ENCODE measurements at regions of chr5 and their contacts with region 1.

Region 1: GRCh38 chr5:177425801-177426565 is 493 bp upstream of the GRK6 start:
- DNase-seq: peak; percentile 99 to 100
- H3K4me3 ChIP-seq: peak overlapping the region; percentile 64
- H3K27ac ChIP-seq: peak overlapping the region; percentile 81
- H3K4me1 ChIP-seq: peaks cover 23% of the 10 kb centered on the region
- H3K27me3 ChIP-seq: no peaks in the 10 kb centered on the region
- CTCF ChIP-seq: no peak

Region 2: GRCh38 chr5:177154003-177154643 is 271.9 kb before region 1 on chr5:
- CTCF ChIA-PET with region 1: no interaction called
- POLR2A ChIA-PET with region 1: no interaction called
- intact Hi-C with region 1: no loop called
- DNase-seq: no peak
- H3K4me3 ChIP-seq: no peak overlapping the region
- H3K27ac ChIP-seq: no peak overlapping the region
- H3K4me1 ChIP-seq: no peaks in the 10 kb centered on the region
- H3K27me3 ChIP-seq: no peaks in the 10 kb centered on the region
- CTCF ChIP-seq: no peak

Region 3: GRCh38 chr5:177317959-177318377 is 108.0 kb before region 1 on chr5:
- CTCF ChIA-PET with region 1: no interaction called
- POLR2A ChIA-PET with region 1: no interaction called
- intact Hi-C with region 1: loop called (anchors 1 kb)
- DNase-seq: peak; percentile 67 to 72
- H3K4me3 ChIP-seq: no peak overlapping the region
- H3K27ac ChIP-seq: no peak overlapping the region
- H3K4me1 ChIP-seq: peaks cover 4% of the 10 kb centered on the region; the same call in 1 of the 2 replicates
- H3K27me3 ChIP-seq: no peaks in the 10 kb centered on the region
- CTCF ChIP-seq: peak; percentile 92

Region 4: DNA sequence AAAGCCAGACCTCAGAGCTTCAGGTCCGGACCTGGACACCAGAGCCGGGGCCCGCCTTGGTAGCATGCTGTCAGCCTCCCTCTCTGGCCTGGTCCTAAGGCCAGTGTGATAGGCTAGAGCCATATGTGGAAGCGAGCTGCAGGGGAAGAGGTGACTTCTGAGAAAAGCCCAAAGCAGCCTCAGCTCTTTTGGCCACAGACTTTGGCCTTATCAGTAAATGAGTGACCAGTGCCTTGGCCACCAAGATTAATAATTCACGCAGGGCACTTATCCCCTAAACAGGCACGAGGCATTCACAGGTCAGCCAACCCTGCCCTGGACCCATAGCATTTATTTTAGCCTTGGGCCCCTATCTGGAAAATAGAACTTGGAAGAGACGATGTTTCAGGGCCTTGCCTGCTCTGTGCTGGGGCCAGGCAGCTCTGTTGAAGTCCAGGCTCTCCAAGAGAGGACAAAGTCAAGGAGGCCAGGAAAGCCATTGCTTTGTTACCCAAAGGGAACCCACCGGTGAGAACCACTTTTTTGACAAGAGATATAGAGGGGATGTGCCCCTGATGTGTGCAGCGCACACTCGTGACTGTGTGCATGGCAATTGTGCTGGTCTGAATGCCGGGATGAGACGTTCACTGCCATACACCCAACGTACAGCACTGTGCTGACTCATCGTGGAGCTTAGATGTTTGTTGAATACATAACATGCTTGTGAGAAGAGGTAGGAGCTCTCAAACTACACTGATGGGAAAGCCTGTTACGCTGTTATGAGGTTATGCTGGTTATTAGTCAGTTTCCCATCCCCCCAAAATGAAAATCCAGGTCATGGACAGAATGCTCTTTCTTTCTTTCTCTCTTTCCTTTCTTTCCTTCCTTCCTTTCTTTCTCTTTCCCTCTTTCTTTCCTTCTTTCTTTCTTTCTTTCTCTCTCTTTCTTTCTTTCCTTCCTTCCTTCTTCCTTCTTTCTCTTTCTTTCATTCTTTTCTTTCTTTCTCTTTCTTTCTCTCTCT is 46.8 kb before region 1 on chr5:
- CTCF ChIA-PET with region 1: no interaction called
- POLR2A ChIA-PET with region 1: interaction called, 30 read pairs
- intact Hi-C with region 1: no loop called
- DNase-seq: peak; percentile 41 to 71
- H3K4me3 ChIP-seq: no peak overlapping the region
- H3K27ac ChIP-seq: no peak overlapping the region
- H3K4me1 ChIP-seq: peaks cover 9% of the 10 kb centered on the region; the same call in 1 of the 2 replicates
- H3K27me3 ChIP-seq: no peaks in the 10 kb centered on the region
- CTCF ChIP-seq: no peak

Region 5: GRCh38 chr5:177446200-177447065 is 20.4 kb after region 1 on chr5 and contains the start of gene PRR7:
- CTCF ChIA-PET with region 1: interaction called, 7 read pairs
- POLR2A ChIA-PET with region 1: interaction called, 31 read pairs
- intact Hi-C with region 1: loop called (anchors 1 kb)
- DNase-seq: peak in 1 of 2 experiments; percentile 73
- H3K4me3 ChIP-seq: peak within 1 kb of the TSS; percentile 68
- H3K27ac ChIP-seq: peak within 1 kb of the TSS; percentile 78
- H3K4me1 ChIP-seq: peaks cover 18% of the 10 kb centered on the region
- H3K27me3 ChIP-seq: no peaks in the 10 kb centered on the region
- CTCF ChIP-seq: no peak
- total RNA-seq, gene PRR7: 22.2 and 31.7 TPM in 2 replicates

Region 6: GRCh38 chr5:178075840-178076548 is 650.0 kb after region 1 on chr5:
- CTCF ChIA-PET with region 1: no interaction called
- POLR2A ChIA-PET with region 1: interaction called, 11 read pairs
- intact Hi-C with region 1: no loop called
- DNase-seq: peak in 1 of 2 experiments; percentile 74
- H3K4me3 ChIP-seq: no peak overlapping the region
- H3K27ac ChIP-seq: no peak overlapping the region
- H3K4me1 ChIP-seq: peaks cover 39% of the 10 kb centered on the region
- H3K27me3 ChIP-seq: peaks cover 19% of the 10 kb centered on the region
- CTCF ChIP-seq: peak; percentile 97